GM10248 (cell line): ENCODE measurements at regions of chr7 and their contacts with region 1.

Region 1: GRCh38 chr7:73436031-73436828 is 2.7 kb downstream of the FZD9 start:
- DNase-seq: no peak
- CTCF ChIP-seq: no peak

Region 2: DNA sequence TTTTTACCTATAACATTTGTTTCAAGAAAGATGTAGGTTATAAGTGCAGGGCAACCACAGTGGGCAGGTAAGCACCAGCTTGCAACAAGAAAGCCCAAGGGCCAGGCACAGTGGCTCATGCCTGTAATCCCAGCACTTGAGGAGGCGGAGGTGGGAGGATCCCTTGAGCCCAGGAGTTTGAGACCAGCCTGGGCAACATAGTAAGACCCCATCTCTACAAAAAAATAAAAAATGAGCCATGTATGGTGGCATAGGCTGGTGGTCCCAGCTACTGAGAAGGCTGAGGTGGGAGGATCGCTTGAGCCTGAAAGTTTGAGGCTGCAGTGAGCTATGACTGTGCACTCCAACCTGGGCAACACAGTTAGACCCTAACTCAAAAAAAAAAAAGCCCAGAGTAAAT is 108.4 kb after region 1 on chr7:
- CTCF ChIA-PET with region 1: no interaction called
- POLR2A ChIA-PET with region 1: interaction called, 10 read pairs
- DNase-seq: no peak
- CTCF ChIP-seq: no peak